GM12878 (cell line): ENCODE measurements at regions of chr16 and their contacts with region 1.

Region 1: GRCh38 chr16:10539244-10539643 is 41.2 kb downstream of the EMP2 start:
- DNase-seq: no peak
- ATAC-seq: no peak
- H3K4me3 ChIP-seq: no peak overlapping the region
- H3K27ac ChIP-seq: no peak overlapping the region
- H3K4me1 ChIP-seq: no peaks in the 10 kb centered on the region
- H3K27me3 ChIP-seq: no peaks in the 10 kb centered on the region
- CTCF ChIP-seq: no peak
- EP300 ChIP-seq: no peak
- POLR2A ChIP-seq: no peak
- RAD21 ChIP-seq: no peak

Region 2: DNA sequence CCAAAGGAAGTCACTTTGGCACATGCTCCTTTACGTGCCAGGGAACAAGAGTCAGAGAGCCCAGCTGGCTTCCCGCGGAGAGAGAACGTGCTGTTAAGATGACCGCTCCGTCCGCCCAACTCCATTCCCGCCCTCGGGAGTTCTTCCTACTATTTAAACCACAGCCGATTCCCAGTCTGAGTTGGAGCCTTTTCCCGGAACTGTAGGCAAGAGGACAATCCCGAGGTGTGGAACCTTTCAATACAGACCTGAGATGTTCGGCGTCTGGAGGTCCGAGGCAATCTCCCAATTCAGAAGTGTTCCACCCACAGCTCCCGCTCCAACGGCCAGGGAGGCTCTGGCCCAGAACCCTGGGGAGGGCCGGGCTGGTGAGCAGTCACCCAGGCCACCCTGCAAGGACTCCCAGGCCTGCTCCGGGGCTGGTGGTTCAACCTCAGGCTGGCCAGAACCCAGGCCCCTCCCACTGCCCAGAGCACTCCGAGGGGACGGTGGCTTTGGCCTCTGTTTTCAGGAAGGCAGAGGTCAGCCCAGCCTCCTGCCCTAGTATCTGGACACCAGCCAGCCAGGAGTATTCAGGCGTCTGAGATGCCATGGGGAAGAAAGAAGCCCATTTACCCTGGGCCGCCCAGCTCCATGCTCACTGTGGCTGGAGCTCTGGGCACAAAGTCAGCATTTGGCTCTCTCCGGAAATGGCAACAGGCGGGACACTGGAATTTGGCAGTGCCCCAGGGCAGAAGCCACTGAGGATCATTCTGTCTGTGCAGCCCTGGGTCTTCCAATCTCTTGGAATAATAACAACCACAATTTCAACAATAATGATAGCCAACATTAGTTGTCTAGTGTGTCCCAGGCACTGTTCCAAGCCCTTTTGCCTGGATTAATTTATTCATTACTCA is 19.8 kb after region 1 on chr16:
- CTCF ChIA-PET with region 1: no interaction called
- POLR2A ChIA-PET with region 1: no interaction called
- RAD21 ChIA-PET with region 1: no interaction called
- SMC1A ChIA-PET with region 1: no interaction called
- in situ Hi-C with region 1: no loop called
- intact Hi-C with region 1: no loop called
- DNase-seq: no peak
- ATAC-seq: no peak
- H3K4me3 ChIP-seq: no peak overlapping the region
- H3K27ac ChIP-seq: no peak overlapping the region
- H3K4me1 ChIP-seq: no peaks in the 10 kb centered on the region
- H3K27me3 ChIP-seq: no peaks in the 10 kb centered on the region
- CTCF ChIP-seq: no peak
- EP300 ChIP-seq: no peak
- POLR2A ChIP-seq: no peak
- RAD21 ChIP-seq: no peak

Region 3: GRCh38 chr16:10597187-10597601 is 58.0 kb after region 1 on chr16:
- CTCF ChIA-PET with region 1: no interaction called
- POLR2A ChIA-PET with region 1: no interaction called
- RAD21 ChIA-PET with region 1: interaction called, 3 read pairs
- SMC1A ChIA-PET with region 1: interaction called, 3 read pairs
- in situ Hi-C with region 1: no loop called
- intact Hi-C with region 1: loop called (anchors 5 kb)
- DNase-seq: no peak
- ATAC-seq: peak; percentile 65
- H3K4me3 ChIP-seq: no peak overlapping the region
- H3K27ac ChIP-seq: no peak overlapping the region
- H3K4me1 ChIP-seq: peaks cover 44% of the 10 kb centered on the region
- H3K27me3 ChIP-seq: no peaks in the 10 kb centered on the region
- CTCF ChIP-seq: peak; percentile 25 to 43 (median 29); a peak in 3 of 6 replicates
- EP300 ChIP-seq: no peak; a peak in 1 of 4 replicates
- POLR2A ChIP-seq: no peak
- RAD21 ChIP-seq: no peak

Region 4: GRCh38 chr16:10625593-10626273 is 86.5 kb after region 1 on chr16:
- CTCF ChIA-PET with region 1: no interaction called
- POLR2A ChIA-PET with region 1: no interaction called
- RAD21 ChIA-PET with region 1: no interaction called
- SMC1A ChIA-PET with region 1: no interaction called
- in situ Hi-C with region 1: no loop called
- intact Hi-C with region 1: no loop called
- DNase-seq: no peak
- ATAC-seq: peak; percentile 52; the same call in 1 of the 3 replicates
- H3K4me3 ChIP-seq: no peak overlapping the region
- H3K27ac ChIP-seq: no peak overlapping the region
- H3K4me1 ChIP-seq: peaks cover 6% of the 10 kb centered on the region
- H3K27me3 ChIP-seq: no peaks in the 10 kb centered on the region
- CTCF ChIP-seq: no peak
- EP300 ChIP-seq: no peak
- POLR2A ChIP-seq: no peak
- RAD21 ChIP-seq: no peak